K562 (cell line): ENCODE measurements at regions of chr5 and their contacts with region 1.

Region 1: GRCh38 chr5:73393611-73394489 is 54.7 kb downstream of the FOXD1 start:
- DNase-seq: no peak
- ATAC-seq: no peak
- H3K4me3 ChIP-seq: no peak overlapping the region
- H3K27ac ChIP-seq: no peak overlapping the region
- H3K4me1 ChIP-seq: no peaks in the 10 kb centered on the region
- H3K27me3 ChIP-seq: peaks cover 0 to 8% of the 10 kb centered on the region in 2 experiments; a peak in 1 of 5 replicates
- CTCF ChIP-seq: no peak
- EP300 ChIP-seq: no peak
- POLR2A ChIP-seq: no peak
- RAD21 ChIP-seq: no peak

Region 2: DNA sequence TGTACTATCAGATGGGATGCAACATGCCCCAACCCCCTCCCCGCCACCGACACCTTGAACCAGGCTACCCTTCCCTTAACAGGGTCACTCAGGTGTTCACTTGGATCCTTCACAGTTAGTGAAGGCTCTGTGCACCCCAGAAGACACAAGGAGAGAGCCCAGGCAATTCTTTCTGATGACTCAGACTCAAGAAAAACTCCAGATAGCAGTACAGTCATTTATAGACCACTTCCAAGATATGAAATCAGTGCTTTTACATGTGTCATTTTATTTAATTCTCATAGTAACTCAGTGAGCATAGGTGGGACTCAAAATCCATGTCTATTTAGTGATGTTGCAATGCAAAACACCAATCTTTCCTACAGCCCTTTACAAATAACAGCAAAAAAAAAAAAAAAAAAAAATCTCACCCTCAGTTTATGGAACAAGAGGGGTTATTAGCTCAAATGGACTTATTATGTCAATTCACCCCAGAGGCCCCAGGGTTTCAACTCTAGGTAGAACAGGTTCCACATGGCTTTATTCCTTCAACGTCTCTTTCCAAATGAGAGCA is 17.2 kb before region 1 on chr5:
- CTCF ChIA-PET with region 1: no interaction called
- POLR2A ChIA-PET with region 1: interaction called, 13 read pairs
- in situ Hi-C with region 1: no loop called
- intact Hi-C with region 1: no loop called
- DNase-seq: no peak
- ATAC-seq: no peak
- H3K4me3 ChIP-seq: no peak overlapping the region
- H3K27ac ChIP-seq: no peak overlapping the region
- H3K4me1 ChIP-seq: peaks cover 0 to 13% of the 10 kb centered on the region in 2 experiments; a peak in 1 of 5 replicates
- H3K27me3 ChIP-seq: peaks cover 19 to 32% of the 10 kb centered on the region in 2 experiments
- CTCF ChIP-seq: no peak
- EP300 ChIP-seq: no peak
- POLR2A ChIP-seq: no peak
- RAD21 ChIP-seq: no peak